ENCODE measurements at regions of chr5 and their contacts with region 1.

Region 1: DNA sequence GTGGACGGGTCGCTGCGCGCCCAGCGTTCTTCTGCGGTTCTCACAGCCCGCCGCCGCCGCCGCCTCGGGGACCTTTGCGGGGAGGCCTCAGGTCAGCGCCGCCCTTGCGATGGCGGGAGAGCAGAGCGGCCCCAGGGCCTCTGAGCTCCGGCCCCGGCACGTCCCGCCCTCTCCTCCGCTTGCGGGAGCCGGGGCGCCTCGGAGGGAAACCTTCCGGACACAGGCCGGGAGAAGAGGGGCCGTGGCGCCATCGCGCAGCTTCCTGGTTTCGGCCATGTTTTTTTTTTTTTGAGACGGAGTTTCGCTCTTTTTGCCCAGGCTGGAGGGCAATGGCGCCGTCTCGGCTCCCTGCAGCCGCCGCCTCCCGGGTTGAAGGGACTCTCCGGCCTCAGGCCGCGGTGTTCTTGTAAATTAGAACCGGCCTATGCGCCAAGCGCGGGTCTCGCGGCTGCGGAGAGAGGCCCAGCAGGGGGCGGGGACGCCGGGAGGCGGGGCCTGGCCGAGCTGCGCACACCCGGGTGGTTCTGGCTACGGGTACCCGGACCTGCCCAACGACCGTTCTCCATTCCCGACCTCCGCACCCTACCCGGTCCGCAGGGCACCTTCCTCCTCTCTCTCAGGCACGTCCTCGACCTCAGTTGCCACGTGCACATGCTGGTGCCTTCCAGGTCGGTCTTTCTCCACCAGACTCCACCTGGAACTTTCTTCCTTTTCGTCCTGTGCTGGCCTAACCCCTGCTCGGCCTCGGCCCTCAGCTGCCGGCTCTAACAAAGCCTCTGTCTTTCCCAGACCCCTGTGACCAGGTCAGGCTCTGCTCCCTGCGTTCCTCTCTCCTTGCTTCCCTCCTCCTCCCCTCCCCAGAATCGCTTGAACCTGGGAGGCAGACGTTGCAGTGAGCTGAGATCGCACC is 28.8 kb upstream of the MGAT1 start:
- DNase-seq: peak; percentile 49 to 83 (median 70)
- ATAC-seq: peak; percentile 37 to 68
- H3K4me3 Mint-ChIP-seq: peak overlapping the region; percentile 94 to 100 (median 96)
- H3K27ac Mint-ChIP-seq: peak overlapping the region; percentile 96 to 100 (median 98)
- H3K4me1 Mint-ChIP-seq: peaks cover 24 to 63% (median 61%) of the 10 kb centered on the region in 4 donors
- H3K27me3 Mint-ChIP-seq: no peaks in the 10 kb centered on the region

Region 2: GRCh38 chr5:180784497-180785097 is 46.8 kb before region 1 on chr5:
- POLR2A ChIA-PET with region 1: interaction called, 29 read pairs
- DNase-seq: peak; percentile 48 to 91 (median 70)
- ATAC-seq: peak; percentile 78 to 91
- H3K4me3 Mint-ChIP-seq: no peak overlapping the region
- H3K27ac Mint-ChIP-seq: peak overlapping the region; percentile 8 to 87 (median 47)
- H3K4me1 Mint-ChIP-seq: peaks cover 23 to 57% (median 44%) of the 10 kb centered on the region in 4 donors
- H3K27me3 Mint-ChIP-seq: no peaks in the 10 kb centered on the region

Region 3: DNA sequence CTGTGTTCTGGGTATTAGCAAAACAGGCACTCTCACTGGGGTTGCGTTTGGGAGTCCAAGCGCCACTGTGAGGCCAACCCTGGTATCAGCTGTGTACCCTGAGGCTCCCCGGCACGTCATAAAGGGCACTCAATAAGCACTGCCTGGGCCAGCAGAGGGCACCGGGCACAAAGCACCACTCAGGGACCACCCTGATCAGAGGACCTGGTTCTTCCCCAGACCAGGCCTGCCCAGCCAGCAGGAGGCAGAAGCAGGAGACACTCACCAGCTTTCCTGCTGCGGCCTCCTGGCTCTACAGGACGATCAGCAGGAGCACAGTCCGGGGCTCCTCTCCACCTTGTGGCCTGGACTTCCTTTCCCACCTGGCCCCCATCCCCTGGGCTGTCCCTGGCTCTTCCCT is 41.4 kb before region 1 on chr5:
- POLR2A ChIA-PET with region 1: interaction called, 29 read pairs
- DNase-seq: peak in 2 of 10 donors; percentile 27 to 68
- ATAC-seq: peak; percentile 71 to 86
- H3K4me3 Mint-ChIP-seq: no peak overlapping the region
- H3K27ac Mint-ChIP-seq: peak overlapping the region; percentile 24 to 88 (median 73)
- H3K4me1 Mint-ChIP-seq: peaks cover 30 to 74% (median 56%) of the 10 kb centered on the region in 4 donors
- H3K27me3 Mint-ChIP-seq: no peaks in the 10 kb centered on the region

Region 4: GRCh38 chr5:180810210-180810958 is 21.0 kb before region 1 on chr5:
- POLR2A ChIA-PET with region 1: interaction called, 642 read pairs
- DNase-seq: peak; percentile 88 to 100 (median 96)
- ATAC-seq: peak; percentile 72 to 74
- H3K4me3 Mint-ChIP-seq: peak overlapping the region; percentile 83 to 99 (median 92)
- H3K27ac Mint-ChIP-seq: peak overlapping the region; percentile 93 to 100 (median 100)
- H3K4me1 Mint-ChIP-seq: peaks cover 47 to 84% (median 75%) of the 10 kb centered on the region in 4 donors
- H3K27me3 Mint-ChIP-seq: no peaks in the 10 kb centered on the region

Region 5: GRCh38 chr5:180848878-180849277 is 17.5 kb after region 1 on chr5:
- POLR2A ChIA-PET with region 1: interaction called, 11 read pairs
- DNase-seq: no peak
- ATAC-seq: no peak
- H3K4me3 Mint-ChIP-seq: no peak overlapping the region
- H3K27ac Mint-ChIP-seq: no peak overlapping the region
- H3K4me1 Mint-ChIP-seq: peaks cover 2 to 33% (median 13%) of the 10 kb centered on the region in 4 donors
- H3K27me3 Mint-ChIP-seq: no peaks in the 10 kb centered on the region

Region 6: DNA sequence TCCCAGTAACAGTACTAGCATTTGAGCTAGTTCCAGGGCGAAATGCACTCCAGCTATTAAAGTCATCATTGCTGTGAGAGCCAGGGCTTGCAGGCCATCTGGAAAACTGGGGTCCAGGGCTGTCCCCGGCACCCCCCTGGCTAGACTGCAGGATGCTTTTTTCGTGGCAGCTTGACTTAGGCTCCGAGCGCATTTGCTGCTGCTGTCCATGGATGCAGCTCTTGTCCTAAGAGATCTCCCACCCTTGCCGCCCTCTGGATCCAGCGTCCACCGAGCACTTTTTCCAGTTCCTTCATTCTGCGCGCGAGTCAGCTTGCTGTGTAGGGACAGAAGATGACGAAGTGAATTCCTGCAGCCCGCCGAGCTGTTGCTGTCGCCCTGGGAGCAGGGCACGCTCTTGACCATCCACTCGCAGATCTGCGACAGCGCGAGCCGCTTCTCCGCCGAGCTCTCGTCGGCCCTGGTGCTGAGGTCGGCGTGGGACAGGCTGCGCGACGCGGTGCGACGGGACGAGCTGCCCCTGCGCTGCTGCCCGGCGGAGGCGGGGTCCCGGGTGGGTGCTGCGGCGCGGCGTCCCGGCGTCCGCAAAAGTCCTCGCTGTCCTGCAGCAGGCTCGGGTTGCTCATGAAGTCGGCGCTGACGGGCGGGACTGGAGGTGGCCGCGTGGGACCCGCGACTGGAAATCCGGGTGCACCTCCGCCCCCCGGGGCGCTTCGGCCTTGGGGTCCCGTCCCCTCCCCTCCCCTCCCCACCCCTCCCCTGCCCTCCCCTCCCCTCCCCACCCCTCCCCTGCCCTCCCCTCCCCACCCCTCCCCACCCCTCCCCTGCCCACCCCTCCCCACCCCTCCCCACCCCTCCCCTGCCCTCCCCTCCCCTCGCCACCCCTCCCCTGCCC is 269.0 kb after region 1 on chr5:
- POLR2A ChIA-PET with region 1: no interaction called
- DNase-seq: no peak
- ATAC-seq: no peak
- H3K4me3 Mint-ChIP-seq: peak overlapping the region in 9 of 10 donors; percentile 35 to 75 (median 55)
- H3K27ac Mint-ChIP-seq: peak overlapping the region in 1 of 10 donors; percentile 44
- H3K4me1 Mint-ChIP-seq: peaks cover 7 to 20% (median 12%) of the 10 kb centered on the region in 4 donors
- H3K27me3 Mint-ChIP-seq: peaks cover 18 to 35% (median 29%) of the 10 kb centered on the region in 5 donors